ENCODE measurements at regions of chr17 and their contacts with region 1.

Region 1: DNA sequence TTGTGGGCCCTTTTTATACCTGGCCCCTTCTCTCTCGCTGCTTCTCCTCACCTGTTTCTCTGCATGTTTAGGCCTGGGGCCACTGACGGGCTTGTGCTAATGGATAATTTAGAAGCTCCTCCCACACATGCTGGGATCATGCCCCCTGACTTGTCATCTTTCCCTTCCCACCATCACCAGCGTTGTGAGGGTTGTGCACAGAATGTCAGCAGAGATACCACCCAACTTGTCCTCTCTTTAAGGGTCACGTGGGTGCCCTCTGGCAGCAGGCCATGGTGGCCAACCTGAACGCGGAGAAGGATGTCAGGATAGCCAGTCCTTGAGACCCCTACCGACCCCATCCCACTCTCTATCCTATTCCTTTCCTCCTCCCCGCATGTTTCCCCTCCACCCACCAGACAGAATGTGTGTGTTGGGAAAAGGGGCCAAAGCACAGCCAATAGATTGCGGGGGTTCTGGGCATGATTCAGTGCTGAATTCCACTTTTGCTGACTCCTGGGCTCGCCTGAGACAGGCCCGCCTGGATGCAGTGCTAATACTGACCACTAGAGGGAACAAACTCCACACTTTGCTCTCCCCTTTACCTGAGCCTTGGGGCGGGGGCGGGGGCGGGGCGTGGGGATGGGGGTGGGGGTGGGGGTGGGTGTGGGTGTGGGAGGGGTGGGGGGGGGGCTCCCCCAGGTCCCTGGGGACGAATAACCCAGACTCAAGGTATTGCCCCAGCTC is at the start of gene GH2:
- DNase-seq: no peak
- H3K4me3 ChIP-seq: no peak within 1 kb of the TSS
- H3K27me3 ChIP-seq: peaks cover 6% of the 10 kb centered on the region
- CTCF ChIP-seq: peak; percentile 78
- polyA plus RNA-seq, gene GH2: not detected in 2 replicates

Region 2: DNA sequence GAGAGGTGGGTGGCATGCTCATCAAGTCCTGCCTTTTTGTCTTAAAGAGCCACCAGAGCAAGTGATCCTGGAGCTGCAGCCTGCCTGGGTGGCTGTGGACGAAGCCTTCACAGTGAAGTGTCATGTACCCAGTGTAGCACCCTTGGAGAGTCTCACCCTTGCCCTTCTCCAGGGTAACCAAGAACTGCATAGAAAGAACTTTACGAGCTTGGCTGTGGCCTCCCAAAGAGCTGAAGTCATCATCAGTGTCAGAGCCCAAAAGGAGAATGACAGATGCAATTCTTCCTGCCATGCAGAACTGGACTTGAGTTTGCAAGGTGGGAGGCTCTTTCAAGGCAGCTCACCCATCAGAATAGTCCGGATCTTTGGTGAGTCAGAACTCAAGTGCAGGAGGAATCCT is 22.8 kb before region 1 on chr17:
- CTCF ChIA-PET with region 1: interaction called, 26 read pairs
- POLR2A ChIA-PET with region 1: interaction called, 3 read pairs
- DNase-seq: no peak
- H3K4me3 ChIP-seq: no peak overlapping the region
- H3K27me3 ChIP-seq: peaks cover 13% of the 10 kb centered on the region
- CTCF ChIP-seq: no peak

Region 3: GRCh38 chr17:63904316-63904715 is 22.3 kb after region 1 on chr17:
- CTCF ChIA-PET with region 1: interaction called, 30 read pairs
- POLR2A ChIA-PET with region 1: no interaction called
- DNase-seq: no peak
- H3K4me3 ChIP-seq: no peak overlapping the region
- H3K27me3 ChIP-seq: peaks cover 2% of the 10 kb centered on the region; the same call in 1 of the 2 replicates
- CTCF ChIP-seq: no peak

Measured in BJ (cell line).